Activated CD4-positive, alpha-beta memory T cell treated with anti-CD3 and anti-CD28 coated beads, Interleukin-2, amount 10 ng/mL, durations not matched to agents 7 days and 5 days (primary cell): ENCODE measurements at regions of chr6 and their contacts with region 1.

Region 1: GRCh38 chr6:34236131-34236996 is at the start of gene HMGA1:
- DNase-seq: peak; percentile 90
- H3K4me3 Mint-ChIP-seq: peak within 1 kb of the TSS; percentile 85
- H3K27ac Mint-ChIP-seq: peak within 1 kb of the TSS; percentile 88
- H3K4me1 Mint-ChIP-seq: peaks cover 38% of the 10 kb centered on the region
- H3K27me3 Mint-ChIP-seq: no peaks in the 10 kb centered on the region
- total RNA-seq, gene HMGA1: 269 to 282 TPM

Region 2: GRCh38 chr6:34182751-34183531 is 53.4 kb before region 1 on chr6:
- CTCF ChIA-PET with region 1: no interaction called
- POLR2A ChIA-PET with region 1: interaction called, 10 read pairs
- DNase-seq: peak; percentile 76
- H3K4me3 Mint-ChIP-seq: peak overlapping the region; percentile 36
- H3K27ac Mint-ChIP-seq: peak overlapping the region; percentile 60
- H3K4me1 Mint-ChIP-seq: peaks cover 17% of the 10 kb centered on the region
- H3K27me3 Mint-ChIP-seq: no peaks in the 10 kb centered on the region

Region 3: DNA sequence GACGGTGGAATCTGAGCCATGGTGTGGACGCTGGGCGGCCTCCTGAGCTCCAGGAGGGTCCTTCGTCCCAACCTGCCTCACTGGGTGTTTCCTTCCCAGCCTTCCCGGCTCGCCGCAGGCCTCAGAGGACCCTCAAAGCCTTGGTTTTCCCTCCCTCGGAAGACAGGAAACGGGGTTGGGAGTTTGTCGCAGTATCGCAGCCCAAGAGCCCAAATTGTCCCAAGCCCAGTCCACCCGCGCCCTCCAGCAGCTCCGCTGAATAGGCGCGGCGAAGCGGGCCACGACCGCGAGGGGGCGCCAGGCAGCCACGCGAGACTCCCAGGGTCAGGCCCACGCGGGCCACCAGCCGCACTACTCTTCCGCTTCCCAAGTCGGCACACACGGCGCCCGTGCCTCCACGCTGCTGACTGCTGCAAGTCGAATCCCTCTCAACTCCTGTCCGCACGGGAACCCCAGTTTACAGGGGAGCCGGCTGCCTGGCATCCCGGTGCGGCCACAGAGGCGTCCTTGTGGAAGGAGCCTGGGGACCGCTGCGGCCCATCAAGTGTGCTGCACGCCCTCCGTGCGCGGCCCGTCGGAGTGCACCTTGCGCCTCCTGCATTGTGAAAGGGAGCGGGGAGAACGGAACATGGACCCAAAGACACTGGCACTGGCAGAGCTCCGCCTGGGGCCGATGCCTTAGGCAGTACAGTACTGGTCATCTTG is 40.1 kb before region 1 on chr6:
- CTCF ChIA-PET with region 1: no interaction called
- POLR2A ChIA-PET with region 1: interaction called, 15 read pairs
- DNase-seq: peak; percentile 87
- H3K4me3 Mint-ChIP-seq: peak overlapping the region; percentile 73
- H3K27ac Mint-ChIP-seq: no peak overlapping the region
- H3K4me1 Mint-ChIP-seq: peaks cover 3% of the 10 kb centered on the region
- H3K27me3 Mint-ChIP-seq: peaks cover 11% of the 10 kb centered on the region

Region 4: DNA sequence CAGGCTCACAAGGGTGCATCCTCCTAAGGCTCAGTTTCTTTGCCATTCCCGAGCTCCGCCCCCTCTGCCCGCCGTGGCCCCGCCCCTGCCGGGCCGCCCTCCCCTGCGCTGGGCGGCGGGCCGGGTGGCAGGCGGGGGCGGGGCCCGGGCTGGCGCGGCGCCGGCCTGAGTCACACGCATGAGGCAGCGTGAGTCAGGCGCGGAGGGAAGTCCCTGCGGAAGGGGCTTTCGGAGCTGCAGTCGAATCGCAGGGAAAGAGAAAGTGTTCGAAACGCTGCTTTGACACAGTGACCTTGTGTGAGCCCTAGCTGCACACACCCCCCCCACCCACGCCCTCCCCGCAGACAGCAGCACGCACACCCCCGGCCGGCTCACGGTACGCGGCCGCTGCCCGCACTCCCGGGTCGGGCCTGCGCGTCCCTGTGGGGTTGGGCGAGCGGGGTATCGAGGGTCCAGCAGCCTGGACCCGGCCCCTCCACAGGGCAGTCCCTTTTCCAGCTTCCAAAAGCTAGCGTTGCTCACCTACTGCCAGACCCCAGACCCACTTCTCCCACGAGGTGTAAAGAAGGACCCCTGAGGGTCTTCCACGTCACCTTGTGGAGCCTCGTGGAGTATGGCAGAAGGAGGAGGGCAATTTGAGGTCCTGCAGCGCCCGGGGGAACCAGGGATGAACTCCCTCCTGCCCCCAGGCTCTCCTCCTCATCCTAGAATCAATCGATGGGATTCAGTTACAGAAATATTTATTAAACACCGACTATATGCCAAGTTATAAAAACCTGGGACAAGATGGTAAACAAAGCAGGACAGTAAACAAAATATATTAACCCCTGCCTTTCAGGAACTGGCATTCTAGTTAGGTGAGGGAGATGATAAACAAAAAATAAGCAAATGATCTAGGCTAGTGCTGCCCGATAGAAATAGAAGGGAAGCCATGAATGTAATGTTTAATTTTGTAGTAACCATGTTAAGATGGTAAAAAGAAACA is 12.1 kb before region 1 on chr6:
- CTCF ChIA-PET with region 1: interaction called, 4 read pairs
- POLR2A ChIA-PET with region 1: interaction called, 42 read pairs
- DNase-seq: peak; percentile 94
- H3K4me3 Mint-ChIP-seq: peak overlapping the region; percentile 64
- H3K27ac Mint-ChIP-seq: peak overlapping the region; percentile 59
- H3K4me1 Mint-ChIP-seq: peaks cover 32% of the 10 kb centered on the region
- H3K27me3 Mint-ChIP-seq: peaks cover 3% of the 10 kb centered on the region

Region 5: DNA sequence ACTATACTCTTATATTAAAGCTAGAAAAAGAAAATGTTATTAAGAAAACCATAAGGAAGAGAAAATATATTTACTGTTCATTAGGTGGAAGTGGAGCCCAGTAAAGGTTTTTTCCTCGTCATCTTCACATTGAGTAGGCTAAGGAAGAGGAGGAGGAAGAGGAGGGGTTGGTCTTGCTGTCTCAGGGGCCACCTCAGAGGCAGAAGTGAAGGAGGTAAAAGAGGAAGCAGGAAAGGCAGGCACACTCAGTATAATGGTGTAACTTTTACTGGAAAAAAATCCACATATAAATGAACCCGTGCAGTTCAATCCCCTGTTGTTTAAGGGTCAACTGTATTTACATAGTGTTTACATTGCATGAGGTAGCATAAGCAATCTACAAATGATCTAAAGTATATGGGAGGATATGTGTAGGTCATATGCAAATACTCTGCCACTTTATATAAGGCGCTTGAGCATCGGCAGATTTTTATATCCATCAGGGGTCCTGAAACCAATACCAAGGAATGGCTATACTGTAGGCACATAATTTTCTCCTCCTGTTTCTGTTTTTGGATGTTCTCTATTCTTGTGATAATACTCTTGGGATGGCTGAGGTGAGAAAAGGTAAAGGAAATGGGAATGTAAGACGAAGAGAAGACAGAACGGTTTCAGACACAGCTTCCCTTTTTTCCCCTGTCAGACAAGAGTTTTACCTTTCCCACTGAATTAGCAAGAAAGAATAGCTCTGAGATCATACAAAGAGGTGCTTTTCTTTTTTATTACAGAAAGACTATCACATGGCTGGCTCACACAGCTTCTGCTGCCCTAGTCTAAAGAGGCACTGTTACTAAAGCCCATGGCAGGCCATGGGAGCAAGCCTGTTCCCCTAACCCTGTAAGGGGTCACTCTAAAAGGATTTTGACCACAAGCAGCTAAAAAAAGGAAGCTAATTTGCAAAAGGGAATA is 96.2 kb after region 1 on chr6:
- CTCF ChIA-PET with region 1: no interaction called
- POLR2A ChIA-PET with region 1: no interaction called
- DNase-seq: no peak
- H3K4me3 Mint-ChIP-seq: no peak overlapping the region
- H3K27ac Mint-ChIP-seq: no peak overlapping the region
- H3K4me1 Mint-ChIP-seq: peaks cover 7% of the 10 kb centered on the region
- H3K27me3 Mint-ChIP-seq: no peaks in the 10 kb centered on the region

Region 6: GRCh38 chr6:34656378-34657036 is 420.1 kb after region 1 on chr6:
- CTCF ChIA-PET with region 1: no interaction called
- POLR2A ChIA-PET with region 1: interaction called, 10 read pairs
- DNase-seq: peak; percentile 47
- H3K4me3 Mint-ChIP-seq: peak overlapping the region; percentile 67
- H3K27ac Mint-ChIP-seq: peak overlapping the region; percentile 95
- H3K4me1 Mint-ChIP-seq: peaks cover 53% of the 10 kb centered on the region
- H3K27me3 Mint-ChIP-seq: no peaks in the 10 kb centered on the region